AG04450 (cell line): ENCODE measurements at regions of chr11 and their contacts with region 1.

Region 1: GRCh38 chr11:59680287-59681154 is 11.7 kb upstream of the PATL1 start:
- DNase-seq: peak; percentile 61
- H3K4me3 ChIP-seq: no peak overlapping the region
- H3K27ac ChIP-seq: no peak overlapping the region
- H3K27me3 ChIP-seq: peaks cover 5% of the 10 kb centered on the region
- CTCF ChIP-seq: peak; percentile 96

Region 2: DNA sequence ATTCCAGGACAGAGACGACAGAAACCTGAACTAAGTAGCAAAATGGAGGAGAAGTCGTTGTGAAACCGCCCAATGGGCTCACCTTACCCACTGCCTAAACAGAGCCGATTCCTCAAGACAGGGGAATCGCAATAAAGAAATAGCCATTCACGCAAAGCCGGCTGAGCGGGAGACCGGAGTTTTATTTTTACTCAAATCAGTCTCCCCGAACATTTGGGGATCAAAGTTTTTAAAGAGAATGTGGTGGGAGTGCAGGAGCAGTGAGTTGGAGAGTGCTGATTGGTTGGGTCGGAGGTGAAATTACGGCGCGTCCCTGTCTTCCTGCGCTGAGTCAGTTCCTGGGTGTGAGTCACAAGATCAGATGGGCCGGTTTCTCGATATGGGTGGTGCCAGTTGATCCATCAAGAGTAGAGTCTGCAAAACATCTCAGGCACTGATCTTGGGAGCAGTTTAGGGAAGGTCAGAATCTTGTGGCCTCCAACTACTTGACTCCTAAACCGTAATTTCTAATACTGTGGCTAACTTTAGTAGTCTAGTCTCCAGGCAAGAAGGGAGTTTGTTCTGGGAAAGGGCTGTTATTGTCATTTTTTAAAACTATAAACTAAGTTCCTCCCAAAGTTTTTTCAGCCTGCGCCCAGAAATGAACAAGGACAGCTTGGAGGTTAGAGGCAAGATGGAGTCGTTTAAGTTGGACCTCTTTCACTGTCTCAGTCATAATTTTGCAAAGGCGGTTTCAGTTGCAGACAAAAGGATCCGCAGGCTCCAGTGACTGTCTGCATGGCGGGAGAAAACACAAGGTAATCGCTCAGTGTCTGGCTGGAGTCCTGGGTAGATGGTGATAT is 135.1 kb before region 1 on chr11:
- CTCF ChIA-PET with region 1: interaction called, 52 read pairs
- POLR2A ChIA-PET with region 1: no interaction called
- DNase-seq: no peak
- H3K4me3 ChIP-seq: no peak overlapping the region
- H3K27ac ChIP-seq: no peak overlapping the region
- H3K27me3 ChIP-seq: no peaks in the 10 kb centered on the region
- CTCF ChIP-seq: no peak

Region 3: DNA sequence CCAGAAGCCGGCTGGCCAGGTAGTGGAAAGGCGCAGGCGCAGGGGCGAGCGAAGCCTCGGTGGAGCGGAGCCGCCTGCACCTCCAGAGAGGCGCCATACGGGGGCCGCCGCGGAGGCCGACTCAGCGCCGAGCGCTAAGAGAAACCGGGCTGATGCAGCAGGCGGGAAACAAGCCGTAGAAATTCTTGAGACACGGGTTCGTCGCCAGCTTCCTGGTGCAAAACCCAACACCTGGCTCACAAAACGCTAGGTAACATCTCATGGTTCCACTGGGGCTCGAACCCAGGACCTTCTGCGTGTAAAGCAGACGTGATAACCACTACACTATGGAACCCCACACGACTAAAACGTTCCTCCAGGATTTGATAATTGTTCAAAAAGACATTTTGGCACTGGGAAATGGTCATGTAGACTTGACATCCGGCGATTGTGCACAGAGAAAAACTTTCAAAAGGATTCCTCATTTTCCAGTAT is 130.1 kb before region 1 on chr11:
- CTCF ChIA-PET with region 1: interaction called, 12 read pairs
- POLR2A ChIA-PET with region 1: no interaction called
- DNase-seq: peak; percentile 92
- H3K4me3 ChIP-seq: peak overlapping the region; percentile 65
- H3K27ac ChIP-seq: peak overlapping the region; percentile 84
- H3K27me3 ChIP-seq: no peaks in the 10 kb centered on the region
- CTCF ChIP-seq: peak; percentile 50

Region 4: DNA sequence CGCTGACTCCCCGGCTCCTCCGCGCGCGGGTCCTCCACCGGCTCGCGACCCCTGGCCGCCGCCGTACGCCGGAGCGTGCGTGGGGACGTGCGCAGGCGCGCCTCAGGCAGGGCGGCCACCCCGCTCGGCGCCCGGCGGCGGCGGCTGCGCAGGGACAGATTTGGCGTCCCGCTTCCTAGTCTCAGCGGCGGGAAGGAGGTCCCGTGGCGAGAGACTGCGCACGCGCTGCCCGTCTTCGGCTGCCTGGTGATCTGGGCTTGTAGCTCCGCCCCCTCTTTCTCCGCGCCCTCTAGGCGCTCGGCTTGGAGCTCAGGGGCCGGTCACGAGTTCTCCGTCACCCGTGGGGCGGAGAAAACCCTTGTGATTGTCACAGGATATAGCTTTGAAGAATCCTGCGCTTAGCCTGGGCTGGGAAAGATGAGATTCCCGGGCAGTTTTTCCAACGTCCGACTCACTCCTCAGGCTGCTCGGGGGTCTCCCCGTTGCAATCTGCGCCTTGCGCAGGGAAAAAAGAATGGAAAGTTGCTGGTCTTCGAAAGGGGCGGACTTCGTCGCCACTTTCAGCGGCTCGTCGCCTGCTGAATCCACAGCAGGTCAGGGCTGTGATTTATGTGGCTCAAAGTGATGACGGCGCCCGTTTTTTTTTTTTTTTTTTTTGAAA is 11.4 kb before region 1 on chr11 and contains the start of gene PATL1:
- CTCF ChIA-PET with region 1: interaction called, 20 read pairs
- POLR2A ChIA-PET with region 1: no interaction called
- DNase-seq: peak; percentile 95
- H3K4me3 ChIP-seq: peak within 1 kb of the TSS; percentile 85
- H3K27ac ChIP-seq: peak within 1 kb of the TSS; percentile 99
- H3K27me3 ChIP-seq: no peaks in the 10 kb centered on the region
- CTCF ChIP-seq: no peak
- polyA plus RNA-seq, gene PATL1: 36.4 and 43.9 TPM in 2 replicates